Activated CD4-positive, alpha-beta T cell treated with anti-CD3 and anti-CD28 coated beads, Interleukin-2, amount 10 ng/mL, durations not matched to agents 24 days and 14 days (primary cell): ENCODE measurements at regions of chr16 and their contacts with region 1.

Region 1: DNA sequence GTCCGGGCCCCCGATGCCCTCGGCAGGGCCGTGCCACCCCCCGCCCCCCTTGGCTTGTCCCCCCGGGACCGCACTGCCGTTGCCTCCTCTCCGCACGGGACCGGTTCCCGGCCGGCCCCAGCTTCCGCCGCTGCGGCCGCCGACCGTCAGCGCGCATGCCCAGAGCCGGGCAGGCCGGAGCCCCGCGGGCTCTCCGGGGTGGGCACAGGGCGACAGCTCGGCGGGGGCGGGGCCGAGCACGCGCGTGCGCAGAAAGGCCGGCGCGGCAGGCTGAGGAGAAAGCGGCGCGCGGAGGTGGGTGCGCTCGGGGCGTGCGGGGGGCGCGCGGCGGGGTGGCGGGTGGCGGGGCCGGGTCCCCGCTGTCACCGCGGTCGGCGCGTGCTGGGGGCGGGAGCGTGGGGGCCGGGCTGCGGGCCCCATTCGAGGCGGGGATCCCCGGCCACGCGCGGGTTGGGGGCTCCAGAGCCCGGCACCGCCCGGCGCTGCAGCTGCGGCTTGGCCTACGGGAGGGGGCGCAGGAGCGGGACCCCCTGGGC is at the start of gene TBC1D24:
- DNase-seq: peak; percentile 95
- H3K4me3 Mint-ChIP-seq: peak within 1 kb of the TSS; percentile 80
- H3K27ac Mint-ChIP-seq: peak within 1 kb of the TSS; percentile 77
- H3K4me1 Mint-ChIP-seq: peaks cover 12% of the 10 kb centered on the region
- H3K27me3 Mint-ChIP-seq: peaks cover 25% of the 10 kb centered on the region
- total RNA-seq, gene TBC1D24: 16.6 and 20.9 TPM in 2 replicates

Region 2: GRCh38 chr16:2205104-2205966 is 269.6 kb before region 1 on chr16 and contains the start of gene MLST8:
- intact Hi-C with region 1: no loop called
- DNase-seq: peak; percentile 98
- H3K4me3 Mint-ChIP-seq: peak within 1 kb of the TSS; percentile 90
- H3K27ac Mint-ChIP-seq: peak within 1 kb of the TSS; percentile 87
- H3K4me1 Mint-ChIP-seq: peaks cover 15% of the 10 kb centered on the region
- H3K27me3 Mint-ChIP-seq: peaks cover 5% of the 10 kb centered on the region
- total RNA-seq, gene MLST8: 65.2 and 70.3 TPM in 2 replicates

Region 3: GRCh38 chr16:2459647-2460390 is 15.1 kb before region 1 on chr16 and contains the start of gene TEDC2:
- intact Hi-C with region 1: loop called (anchors 1 kb)
- DNase-seq: peak; percentile 99
- H3K4me3 Mint-ChIP-seq: peak within 1 kb of the TSS; percentile 89
- H3K27ac Mint-ChIP-seq: peak within 1 kb of the TSS; percentile 91
- H3K4me1 Mint-ChIP-seq: peaks cover 4% of the 10 kb centered on the region
- H3K27me3 Mint-ChIP-seq: no peaks in the 10 kb centered on the region
- total RNA-seq, gene TEDC2: 40.7 and 41.7 TPM in 2 replicates